ENCODE measurements at regions of chr2 and their contacts with region 1.

Region 1: DNA sequence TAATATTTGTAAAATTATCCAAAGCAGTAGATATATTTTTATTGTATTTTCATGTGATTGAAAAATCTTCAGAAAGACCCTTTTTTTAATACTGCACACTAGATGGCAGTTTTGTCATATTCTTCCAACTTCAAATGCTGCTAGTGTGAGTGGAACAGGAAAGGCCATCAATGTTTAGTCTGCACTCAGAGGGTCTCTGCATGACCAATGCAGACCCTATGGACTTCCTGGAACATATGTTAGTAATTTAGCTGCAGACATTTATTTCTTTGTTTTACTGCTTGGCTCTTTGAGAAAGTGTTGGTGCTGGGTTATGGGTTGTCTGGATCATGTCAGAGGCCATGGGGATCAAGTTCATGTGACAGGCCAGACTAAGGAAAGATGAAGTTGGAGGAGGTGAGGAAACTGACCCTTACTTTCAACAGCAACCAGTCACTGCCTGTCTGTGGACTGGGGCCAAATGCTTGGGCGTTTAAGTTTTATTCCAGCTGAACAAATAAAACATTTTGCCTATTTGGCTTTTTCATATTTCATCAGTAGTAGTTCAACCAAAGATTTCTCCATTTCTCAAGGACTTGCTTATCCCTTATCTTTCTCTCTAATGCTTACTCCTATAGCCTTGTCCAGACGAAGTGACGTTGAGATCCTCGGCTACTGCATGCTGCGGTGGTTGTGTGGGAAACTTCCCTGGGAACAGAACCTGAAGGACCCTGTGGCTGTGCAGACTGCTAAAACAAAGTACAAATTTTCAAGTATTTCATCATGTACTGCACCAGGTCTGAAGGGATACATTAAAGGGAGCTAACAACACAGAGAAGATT is 84.8 kb downstream of the VRK2 start:
- DNase-seq: no peak
- H3K4me3 ChIP-seq: no peak overlapping the region
- H3K27ac ChIP-seq: no peak overlapping the region
- H3K4me1 ChIP-seq: no peaks in the 10 kb centered on the region
- H3K27me3 ChIP-seq: no peaks in the 10 kb centered on the region
- CTCF ChIP-seq: no peak
- POLR2A ChIP-seq: no peak

Region 2: GRCh38 chr2:60047944-60048525 is 1916.6 kb after region 1 on chr2:
- intact Hi-C with region 1: loop called (anchors 5 kb)
- DNase-seq: no peak
- H3K4me3 ChIP-seq: no peak overlapping the region
- H3K27ac ChIP-seq: no peak overlapping the region
- H3K4me1 ChIP-seq: no peaks in the 10 kb centered on the region
- H3K27me3 ChIP-seq: no peaks in the 10 kb centered on the region
- CTCF ChIP-seq: no peak
- POLR2A ChIP-seq: no peak